AG04450 (cell line): ENCODE measurements at regions of chr15 and their contacts with region 1.

Region 1: DNA sequence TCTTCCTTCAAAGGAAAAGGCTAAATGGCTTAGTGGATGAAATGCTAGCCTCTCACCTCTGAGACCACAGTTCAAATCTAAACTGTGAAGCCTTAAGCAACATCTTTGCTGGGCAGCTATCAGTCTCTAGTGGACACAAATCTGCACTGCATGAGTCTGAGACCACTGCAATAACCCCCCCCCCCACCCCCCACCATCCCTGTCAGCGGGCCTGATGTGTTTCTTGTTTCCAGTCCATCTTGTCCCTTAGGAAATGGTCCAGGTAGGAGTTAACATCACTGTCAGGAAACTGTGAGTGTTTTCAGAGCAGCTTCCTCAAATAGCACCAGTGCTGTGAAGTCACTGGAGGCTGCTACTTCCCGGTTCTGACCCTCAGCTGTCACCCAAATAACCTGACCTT is 140.6 kb upstream of the TMCO5A start:
- DNase-seq: no peak
- H3K4me3 ChIP-seq: no peak overlapping the region
- H3K27ac ChIP-seq: no peak overlapping the region
- H3K27me3 ChIP-seq: no peaks in the 10 kb centered on the region
- CTCF ChIP-seq: peak; percentile 42

Region 2: GRCh38 chr15:37764733-37765191 is 29.1 kb before region 1 on chr15:
- CTCF ChIA-PET with region 1: interaction called, 16 read pairs
- POLR2A ChIA-PET with region 1: no interaction called
- DNase-seq: peak; percentile 15
- H3K4me3 ChIP-seq: no peak overlapping the region
- H3K27ac ChIP-seq: no peak overlapping the region
- H3K27me3 ChIP-seq: no peaks in the 10 kb centered on the region
- CTCF ChIP-seq: peak; percentile 72